HCT116 (cell line): ENCODE measurements at regions of chr2 and their contacts with region 1.

Region 1: DNA sequence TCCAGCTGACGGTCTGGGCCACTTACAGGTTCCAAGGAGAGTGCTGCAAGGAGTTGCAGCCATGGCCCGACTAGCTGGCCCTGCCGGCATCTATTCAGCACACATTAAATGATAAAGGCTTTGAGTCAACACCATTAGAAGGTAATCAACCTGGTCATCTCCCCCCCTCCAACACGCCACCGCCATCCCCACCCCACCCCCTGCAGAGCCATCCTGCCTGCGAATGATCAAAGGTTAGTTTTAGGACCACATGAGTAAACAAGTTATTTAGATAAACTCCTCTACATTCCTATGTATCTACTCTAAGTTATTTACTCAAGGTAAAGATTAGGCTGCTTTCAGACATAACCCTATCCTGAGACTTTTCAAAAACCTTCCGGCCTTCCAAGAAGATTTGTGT is 349.3 kb upstream of the SLC39A10 start:
- DNase-seq: no peak
- ATAC-seq: no peak
- H3K4me3 ChIP-seq: no peak overlapping the region
- H3K27ac ChIP-seq: no peak overlapping the region
- H3K4me1 ChIP-seq: no peaks in the 10 kb centered on the region
- H3K27me3 ChIP-seq: no peaks in the 10 kb centered on the region
- CTCF ChIP-seq: no peak
- POLR2A ChIP-seq: no peak
- RAD21 ChIP-seq: no peak

Region 2: DNA sequence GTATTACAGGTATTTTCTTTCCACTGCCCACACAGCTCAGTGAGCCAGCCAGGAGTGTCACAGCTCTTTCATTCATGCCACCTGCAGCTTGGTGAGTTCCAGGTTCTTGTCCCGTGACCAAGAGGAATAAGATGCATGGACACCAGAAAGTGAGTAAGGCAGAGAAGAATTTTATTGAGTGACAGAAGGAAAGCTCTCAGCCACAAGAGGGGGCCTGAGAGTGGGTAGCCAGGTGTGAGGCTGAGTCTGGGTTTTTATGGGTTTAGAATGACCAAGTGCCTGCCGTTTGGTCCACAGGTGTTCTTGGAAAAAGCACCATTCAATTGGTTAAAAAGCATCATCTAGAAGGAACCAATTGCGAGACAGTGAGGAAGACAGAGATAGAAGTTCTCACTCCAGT is 747.8 kb before region 1 on chr2:
- CTCF ChIA-PET with region 1: no interaction called
- POLR2A ChIA-PET with region 1: no interaction called
- RAD21 ChIA-PET with region 1: no interaction called
- intact Hi-C with region 1: loop called (anchors 5 kb)
- DNase-seq: no peak
- ATAC-seq: no peak
- H3K4me3 ChIP-seq: no peak overlapping the region
- H3K27ac ChIP-seq: no peak overlapping the region
- H3K4me1 ChIP-seq: no peaks in the 10 kb centered on the region
- H3K27me3 ChIP-seq: no peaks in the 10 kb centered on the region
- CTCF ChIP-seq: no peak
- POLR2A ChIP-seq: no peak
- RAD21 ChIP-seq: no peak

Region 3: DNA sequence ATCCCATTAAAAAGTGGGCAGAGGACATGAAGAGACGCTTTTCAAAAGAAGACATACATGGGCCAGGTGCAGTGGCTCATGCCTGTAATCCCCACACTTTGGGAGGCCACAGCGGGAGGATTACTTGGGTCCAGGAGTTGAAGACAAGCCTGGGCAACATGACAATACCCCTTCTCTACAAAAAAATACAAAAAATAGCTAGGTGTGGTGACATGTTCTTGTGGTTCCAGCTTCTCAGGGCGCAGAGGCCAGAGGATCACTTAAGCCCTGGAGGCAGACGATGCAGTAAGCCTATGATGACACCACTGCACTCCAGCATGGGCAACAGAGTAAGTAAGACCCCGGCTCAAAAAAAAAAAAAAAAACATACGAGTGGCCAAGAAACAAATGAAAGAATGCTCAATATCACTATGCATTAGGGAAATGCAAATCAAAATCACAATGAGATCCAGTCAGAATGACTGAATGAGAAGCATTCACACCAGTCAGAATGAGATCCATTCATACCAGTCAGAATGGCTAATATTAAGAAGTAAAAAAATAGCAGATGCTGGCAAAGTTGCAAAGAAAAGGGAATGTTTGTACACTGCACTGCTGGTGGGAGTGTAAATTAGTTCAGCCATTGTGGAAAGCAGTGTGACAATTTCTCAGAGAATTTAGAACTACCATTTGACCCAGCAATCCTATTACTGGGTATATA is 200.9 kb before region 1 on chr2:
- CTCF ChIA-PET with region 1: no interaction called
- POLR2A ChIA-PET with region 1: no interaction called
- RAD21 ChIA-PET with region 1: no interaction called
- intact Hi-C with region 1: no loop called
- DNase-seq: no peak
- ATAC-seq: no peak
- H3K4me3 ChIP-seq: no peak overlapping the region
- H3K27ac ChIP-seq: no peak overlapping the region
- H3K4me1 ChIP-seq: no peaks in the 10 kb centered on the region
- H3K27me3 ChIP-seq: no peaks in the 10 kb centered on the region
- CTCF ChIP-seq: no peak
- POLR2A ChIP-seq: no peak
- RAD21 ChIP-seq: no peak